Mammary epithelial cell (primary cell): ENCODE measurements at regions of chr4 and their contacts with region 1.

Region 1: DNA sequence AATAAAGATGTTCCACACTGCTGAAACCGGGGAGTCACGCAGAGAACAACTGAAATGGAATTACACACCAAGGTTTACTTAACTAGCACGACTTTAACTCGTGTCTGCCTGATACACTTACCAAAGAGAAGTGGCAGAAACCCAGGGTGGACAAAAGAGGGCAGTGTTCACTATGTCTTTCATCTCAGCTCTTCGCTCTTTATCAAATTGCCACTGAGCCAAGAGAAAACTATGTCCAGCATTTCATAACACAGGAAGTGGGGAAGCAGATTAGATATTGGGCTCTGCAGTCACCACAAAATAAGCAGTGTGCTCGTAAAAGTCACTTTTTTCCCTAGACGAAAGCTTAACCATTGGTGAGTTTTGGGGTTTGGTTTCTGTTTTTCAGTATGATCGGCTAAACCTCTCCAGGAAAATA is 155.7 kb downstream of the CHIC2 start:
- DNase-seq: peak; percentile 86
- H3K4me3 ChIP-seq: peak overlapping the region in 2 of 3 experiments; percentile 7 to 16
- H3K27ac ChIP-seq: peak overlapping the region; percentile 28
- H3K4me1 ChIP-seq: peaks cover 47% of the 10 kb centered on the region
- H3K27me3 ChIP-seq: no peaks in the 10 kb centered on the region
- CTCF ChIP-seq: peak; percentile 76 to 88

Region 2: GRCh38 chr4:53015681-53016080 is 893.0 kb before region 1 on chr4:
- CTCF ChIA-PET with region 1: no interaction called
- dilution Hi-C with region 1: no loop called
- in situ Hi-C with region 1: no loop called
- intact Hi-C with region 1: loop called (anchors 10 kb)
- DNase-seq: no peak
- H3K4me3 ChIP-seq: no peak overlapping the region
- H3K27ac ChIP-seq: no peak overlapping the region
- H3K4me1 ChIP-seq: no peaks in the 10 kb centered on the region
- H3K27me3 ChIP-seq: no peaks in the 10 kb centered on the region
- CTCF ChIP-seq: peak; percentile 59 to 64

Region 3: GRCh38 chr4:53640576-53641453 is 267.9 kb before region 1 on chr4:
- CTCF ChIA-PET with region 1: no interaction called
- dilution Hi-C with region 1: no loop called
- in situ Hi-C with region 1: no loop called
- intact Hi-C with region 1: no loop called
- DNase-seq: no peak
- H3K4me3 ChIP-seq: no peak overlapping the region
- H3K27ac ChIP-seq: no peak overlapping the region
- H3K4me1 ChIP-seq: peaks cover 11% of the 10 kb centered on the region
- H3K27me3 ChIP-seq: no peaks in the 10 kb centered on the region
- CTCF ChIP-seq: no peak

Region 4: DNA sequence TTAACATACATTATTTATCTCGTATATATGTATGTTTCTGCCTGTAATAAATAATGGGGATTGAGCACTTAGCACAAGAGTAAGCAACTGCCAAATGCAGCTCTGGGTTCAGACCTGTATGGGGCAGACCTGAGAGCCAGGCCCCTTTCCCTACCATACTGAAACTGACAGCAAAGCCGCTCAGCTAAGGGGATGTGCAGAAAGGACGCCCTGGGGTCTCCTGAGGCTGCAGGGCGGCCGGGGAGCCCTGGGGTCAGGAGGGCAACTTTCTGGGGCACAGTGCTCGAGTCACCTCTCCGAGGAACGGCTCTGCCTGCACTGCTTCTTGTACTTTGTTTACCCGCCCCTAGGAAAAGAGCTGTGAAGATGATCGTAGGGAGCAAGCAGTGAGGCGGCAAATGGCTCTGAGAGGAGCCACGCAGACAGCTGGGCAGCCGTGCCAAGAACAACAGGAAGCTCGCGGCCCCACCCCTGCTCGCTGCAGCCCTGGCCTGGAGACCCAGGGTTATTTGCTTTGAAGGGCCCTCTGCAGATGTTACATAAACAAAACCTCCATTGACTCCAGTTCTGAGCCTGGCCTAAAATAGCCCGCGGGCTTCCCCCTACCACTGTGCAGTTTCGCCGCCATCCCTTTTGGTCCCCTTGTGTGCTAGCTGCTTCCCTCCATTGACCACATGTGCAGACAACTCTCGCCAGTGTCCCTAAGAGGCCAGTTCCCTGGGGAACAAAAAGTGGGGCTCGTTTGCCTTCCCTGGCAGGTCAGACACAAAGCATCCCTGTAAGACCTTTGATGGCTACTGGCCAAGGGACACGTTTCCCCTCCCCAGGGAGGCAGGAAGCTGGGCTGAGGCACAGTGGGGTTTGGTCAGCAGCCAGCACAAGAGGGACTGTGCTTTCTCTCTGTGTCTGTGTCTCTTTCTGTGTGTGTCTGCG is 206.1 kb before region 1 on chr4:
- CTCF ChIA-PET with region 1: interaction called, 6 read pairs
- dilution Hi-C with region 1: no loop called
- in situ Hi-C with region 1: no loop called
- intact Hi-C with region 1: loop called (anchors 5 kb)
- DNase-seq: peak; percentile 52
- H3K4me3 ChIP-seq: peak overlapping the region in 2 of 3 experiments; percentile 17 to 20
- H3K27ac ChIP-seq: no peak overlapping the region
- H3K4me1 ChIP-seq: peaks cover 11% of the 10 kb centered on the region
- H3K27me3 ChIP-seq: no peaks in the 10 kb centered on the region
- CTCF ChIP-seq: peak in 1 of 2 donors; percentile 7

Region 5: GRCh38 chr4:53929955-53930798 is 21.5 kb after region 1 on chr4:
- CTCF ChIA-PET with region 1: interaction called, 5 read pairs
- dilution Hi-C with region 1: no loop called
- in situ Hi-C with region 1: no loop called
- intact Hi-C with region 1: loop called (anchors 1 kb)
- DNase-seq: peak; percentile 73
- H3K4me3 ChIP-seq: no peak overlapping the region
- H3K27ac ChIP-seq: no peak overlapping the region
- H3K4me1 ChIP-seq: peaks cover 28% of the 10 kb centered on the region
- H3K27me3 ChIP-seq: no peaks in the 10 kb centered on the region
- CTCF ChIP-seq: peak; percentile 75 to 89

Region 6: DNA sequence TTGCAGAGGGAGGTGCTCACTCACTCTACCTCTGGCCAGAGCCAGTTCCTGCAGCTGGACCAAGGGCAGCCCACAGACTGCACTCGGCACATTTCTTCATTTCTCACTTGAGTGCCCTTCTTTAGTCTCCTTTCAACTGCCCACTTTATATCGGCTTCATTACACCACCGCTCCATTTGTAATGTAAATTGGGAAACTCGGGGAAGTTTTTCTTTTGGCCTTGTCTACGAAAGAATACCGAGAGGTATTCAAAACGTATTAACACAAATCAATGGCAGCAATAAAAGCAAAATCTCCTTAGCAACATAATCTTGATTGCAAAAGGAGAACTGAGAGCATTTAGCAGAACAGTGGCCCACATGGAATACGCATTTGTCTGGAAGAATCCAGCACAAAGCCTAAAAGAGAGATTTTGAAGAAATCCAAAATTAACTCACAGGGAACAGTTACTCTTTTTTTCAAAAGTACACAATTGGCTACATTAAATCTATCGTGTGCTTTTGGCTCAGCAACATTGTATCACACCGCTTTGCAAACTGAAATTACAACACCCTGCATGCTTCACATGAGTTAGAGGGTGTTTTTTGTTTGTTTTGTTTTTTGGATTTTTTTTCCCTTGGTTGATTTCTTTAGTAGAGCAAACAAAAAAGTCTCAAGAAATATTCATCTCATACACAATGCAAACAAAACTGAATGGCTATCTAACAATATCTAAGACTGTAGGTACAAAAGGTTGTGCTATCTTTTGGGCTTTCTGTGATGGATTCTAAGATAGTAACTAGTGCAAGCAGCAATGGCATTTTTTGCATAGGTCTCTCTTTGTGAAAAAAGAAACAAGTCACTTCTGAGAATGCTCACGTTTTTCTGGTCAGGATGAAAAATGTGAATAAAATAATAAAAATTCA is 93.2 kb after region 1 on chr4:
- CTCF ChIA-PET with region 1: no interaction called
- dilution Hi-C with region 1: no loop called
- in situ Hi-C with region 1: no loop called
- intact Hi-C with region 1: no loop called
- DNase-seq: no peak
- H3K4me3 ChIP-seq: no peak overlapping the region
- H3K27ac ChIP-seq: no peak overlapping the region
- H3K4me1 ChIP-seq: no peaks in the 10 kb centered on the region
- H3K27me3 ChIP-seq: no peaks in the 10 kb centered on the region
- CTCF ChIP-seq: no peak

Region 7: DNA sequence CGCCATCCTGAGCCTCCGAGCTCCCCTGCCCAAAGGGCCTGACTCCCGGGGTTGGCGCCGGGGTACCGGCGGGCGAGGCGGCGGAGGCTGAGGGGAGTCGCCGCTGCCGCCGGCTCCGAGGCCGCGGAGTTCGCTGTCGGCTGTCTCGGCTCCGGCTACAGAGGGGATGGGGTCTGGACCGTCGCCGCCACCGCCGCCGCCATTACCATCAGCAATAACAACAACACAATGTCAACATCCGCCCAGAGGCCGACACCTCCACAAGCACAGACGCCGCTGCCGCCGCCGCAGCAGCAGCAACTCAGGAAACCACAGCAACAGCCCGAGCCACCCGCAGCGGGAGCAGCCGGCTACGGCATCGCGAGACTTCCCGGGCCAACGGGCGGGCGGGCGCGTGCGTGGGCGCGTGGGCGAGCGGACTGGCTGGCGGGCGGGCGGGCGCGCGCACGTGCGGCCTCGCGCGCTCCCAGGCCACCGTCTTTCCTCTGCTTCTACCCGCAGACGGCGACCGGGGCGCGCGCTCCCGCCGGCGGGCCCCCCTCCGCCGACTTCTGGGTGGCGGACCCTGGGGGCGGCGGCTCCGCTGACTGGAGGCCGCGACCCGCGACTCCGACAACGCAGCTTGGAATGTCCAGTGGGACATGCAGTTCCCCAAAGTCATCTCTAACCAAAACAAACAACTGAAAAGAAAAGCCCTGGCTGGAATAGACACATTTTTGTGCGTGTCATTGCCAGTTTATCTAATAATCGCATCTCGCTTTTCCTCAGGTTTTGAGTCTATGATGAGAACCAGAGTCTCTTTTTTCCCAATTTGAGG is 155.8 kb after region 1 on chr4 and contains the start of gene CHIC2:
- CTCF ChIA-PET with region 1: no interaction called
- dilution Hi-C with region 1: no loop called
- in situ Hi-C with region 1: no loop called
- intact Hi-C with region 1: loop called (anchors 2 kb)
- DNase-seq: peak; percentile 94
- H3K4me3 ChIP-seq: peak within 1 kb of the TSS; percentile 71 to 78 (median 78)
- H3K27ac ChIP-seq: peak within 1 kb of the TSS; percentile 84
- H3K4me1 ChIP-seq: peaks cover 43% of the 10 kb centered on the region
- H3K27me3 ChIP-seq: no peaks in the 10 kb centered on the region
- CTCF ChIP-seq: no peak
- total RNA-seq, gene CHIC2: 45.4 to 46.7 TPM

Region 8: GRCh38 chr4:54217642-54218495 is 309.2 kb after region 1 on chr4:
- CTCF ChIA-PET with region 1: no interaction called
- dilution Hi-C with region 1: loop called (anchors 5 kb)
- in situ Hi-C with region 1: loop called in 1 of 2 experiments (anchors 5 kb)
- intact Hi-C with region 1: loop called (anchors 1 kb)
- DNase-seq: peak; percentile 82
- H3K4me3 ChIP-seq: peak overlapping the region; percentile 23 to 52 (median 34)
- H3K27ac ChIP-seq: peak overlapping the region; percentile 22
- H3K4me1 ChIP-seq: no peaks in the 10 kb centered on the region
- H3K27me3 ChIP-seq: no peaks in the 10 kb centered on the region
- CTCF ChIP-seq: peak; percentile 73 to 92